ENCODE measurements at regions of chr1 and their contacts with region 1.

Region 1: GRCh38 chr1:181424786-181425403 is 58.4 kb upstream of the CACNA1E start:
- DNase-seq: peak; percentile 91
- H3K4me3 Mint-ChIP-seq: peak overlapping the region; percentile 46
- H3K27ac Mint-ChIP-seq: no peak overlapping the region
- H3K4me1 Mint-ChIP-seq: peaks cover 16% of the 10 kb centered on the region
- H3K27me3 Mint-ChIP-seq: peaks cover 17% of the 10 kb centered on the region

Region 2: GRCh38 chr1:180898441-180899219 is 526.3 kb before region 1 on chr1:
- CTCF ChIA-PET with region 1: no interaction called
- intact Hi-C with region 1: loop called (anchors 10 kb)
- DNase-seq: no peak
- H3K4me3 Mint-ChIP-seq: no peak overlapping the region
- H3K27ac Mint-ChIP-seq: no peak overlapping the region
- H3K4me1 Mint-ChIP-seq: peaks cover 2% of the 10 kb centered on the region
- H3K27me3 Mint-ChIP-seq: peaks cover 4% of the 10 kb centered on the region

Region 3: DNA sequence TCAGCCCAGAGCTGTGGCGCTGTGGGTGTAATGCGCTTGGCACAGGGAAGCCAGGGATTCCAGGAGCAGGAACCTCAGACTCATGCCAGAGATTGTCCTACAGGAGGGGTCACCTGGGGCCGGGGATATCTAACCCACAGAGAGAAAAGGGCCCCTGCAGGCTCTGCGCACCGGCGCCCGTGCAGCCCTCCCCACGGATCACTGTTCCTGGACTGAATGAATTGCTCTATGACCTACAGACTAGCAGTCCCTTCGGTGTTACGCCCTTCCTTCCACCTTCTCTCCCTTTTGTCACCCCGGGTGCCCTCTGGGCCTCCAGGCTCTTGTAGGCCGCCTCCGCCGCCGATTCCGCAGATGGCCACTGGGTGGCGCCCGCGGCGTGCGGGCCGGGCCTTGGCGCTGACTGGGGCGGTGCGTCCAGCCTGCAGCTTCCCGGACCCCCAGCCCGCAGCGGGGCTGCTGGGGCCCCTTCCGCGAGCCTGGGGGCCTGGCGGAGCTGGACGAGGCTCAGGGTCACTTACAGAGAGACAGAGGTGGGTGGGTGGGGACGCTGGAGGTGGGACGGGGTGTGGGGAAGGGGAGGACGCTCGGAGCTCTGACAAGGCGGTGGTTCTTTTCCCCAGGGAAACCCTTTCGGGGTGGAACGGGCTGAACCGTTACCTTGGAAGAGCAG is 235.1 kb before region 1 on chr1:
- CTCF ChIA-PET with region 1: interaction called, 49 read pairs
- intact Hi-C with region 1: loop called (anchors 1 kb)
- DNase-seq: peak; percentile 78
- H3K4me3 Mint-ChIP-seq: no peak overlapping the region
- H3K27ac Mint-ChIP-seq: no peak overlapping the region
- H3K4me1 Mint-ChIP-seq: peaks cover 2% of the 10 kb centered on the region
- H3K27me3 Mint-ChIP-seq: peaks cover 3% of the 10 kb centered on the region

Region 4: GRCh38 chr1:181318022-181318857 is 106.7 kb before region 1 on chr1:
- CTCF ChIA-PET with region 1: interaction called, 7 read pairs
- intact Hi-C with region 1: loop called (anchors 2 kb)
- DNase-seq: peak; percentile 11
- H3K4me3 Mint-ChIP-seq: peak overlapping the region; percentile 56
- H3K27ac Mint-ChIP-seq: no peak overlapping the region
- H3K4me1 Mint-ChIP-seq: peaks cover 29% of the 10 kb centered on the region
- H3K27me3 Mint-ChIP-seq: peaks cover 48% of the 10 kb centered on the region

Region 5: GRCh38 chr1:181324797-181325616 is 99.9 kb before region 1 on chr1:
- CTCF ChIA-PET with region 1: interaction called, 3 read pairs
- intact Hi-C with region 1: loop called (anchors 2 kb)
- DNase-seq: peak; percentile 77
- H3K4me3 Mint-ChIP-seq: no peak overlapping the region
- H3K27ac Mint-ChIP-seq: no peak overlapping the region
- H3K4me1 Mint-ChIP-seq: peaks cover 8% of the 10 kb centered on the region
- H3K27me3 Mint-ChIP-seq: peaks cover 1% of the 10 kb centered on the region